ENCODE measurements at regions of chr18 and their contacts with region 1.

Region 1: DNA sequence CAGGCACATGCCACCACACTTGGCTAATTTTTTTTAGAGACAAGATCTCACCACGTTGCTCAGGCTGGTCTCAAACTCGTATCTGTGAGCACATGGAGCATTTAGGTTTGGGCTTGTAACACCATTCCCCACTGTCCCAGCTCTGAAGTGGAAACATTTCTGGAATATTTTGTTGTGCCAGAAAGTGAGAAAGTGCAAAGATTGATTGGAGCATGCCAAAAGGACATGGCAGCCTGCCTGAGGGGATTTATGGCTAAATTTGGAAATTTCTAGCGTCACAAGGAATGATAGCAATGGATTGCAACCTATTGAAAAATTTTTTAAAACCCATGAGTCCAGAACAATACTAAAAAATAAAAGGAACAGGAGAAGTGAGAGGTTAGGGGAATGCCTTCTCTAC is 136.8 kb downstream of the ESCO1 start:
- DNase-seq: no peak
- H3K4me3 ChIP-seq: no peak overlapping the region
- H3K27ac ChIP-seq: no peak overlapping the region
- H3K4me1 ChIP-seq: no peaks in the 10 kb centered on the region
- H3K27me3 ChIP-seq: no peaks in the 10 kb centered on the region
- CTCF ChIP-seq: no peak
- POLR2A ChIP-seq: no peak

Region 2: DNA sequence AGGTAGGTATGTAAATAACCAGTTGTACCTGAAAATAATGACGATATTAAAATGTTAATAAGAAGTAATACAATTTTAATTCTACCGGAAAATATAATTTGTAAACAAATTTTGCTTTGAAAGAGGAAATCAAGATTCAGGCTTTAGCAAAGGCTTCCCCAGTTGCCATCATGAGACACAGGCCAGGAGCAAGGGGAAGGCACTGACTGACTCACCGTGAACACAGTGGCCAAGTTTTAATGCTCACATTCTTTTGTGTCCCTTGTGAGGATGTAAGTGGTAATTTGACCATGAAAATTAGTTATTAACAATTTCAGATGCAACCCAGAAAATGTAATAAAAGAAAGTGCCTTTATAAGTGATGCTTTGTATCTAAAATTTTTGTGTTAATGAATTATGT is 57.6 kb before region 1 on chr18:
- intact Hi-C with region 1: loop called (anchors 10 kb)
- DNase-seq: no peak
- H3K4me3 ChIP-seq: no peak overlapping the region
- H3K27ac ChIP-seq: no peak overlapping the region
- H3K4me1 ChIP-seq: no peaks in the 10 kb centered on the region
- H3K27me3 ChIP-seq: no peaks in the 10 kb centered on the region
- CTCF ChIP-seq: no peak
- POLR2A ChIP-seq: no peak

Measured in thyroid gland (tissue), 4 donors.